Posterior cingulate gyrus (tissue), 11 donors: ENCODE measurements at regions of chr1 and their contacts with region 1.

Region 1: DNA sequence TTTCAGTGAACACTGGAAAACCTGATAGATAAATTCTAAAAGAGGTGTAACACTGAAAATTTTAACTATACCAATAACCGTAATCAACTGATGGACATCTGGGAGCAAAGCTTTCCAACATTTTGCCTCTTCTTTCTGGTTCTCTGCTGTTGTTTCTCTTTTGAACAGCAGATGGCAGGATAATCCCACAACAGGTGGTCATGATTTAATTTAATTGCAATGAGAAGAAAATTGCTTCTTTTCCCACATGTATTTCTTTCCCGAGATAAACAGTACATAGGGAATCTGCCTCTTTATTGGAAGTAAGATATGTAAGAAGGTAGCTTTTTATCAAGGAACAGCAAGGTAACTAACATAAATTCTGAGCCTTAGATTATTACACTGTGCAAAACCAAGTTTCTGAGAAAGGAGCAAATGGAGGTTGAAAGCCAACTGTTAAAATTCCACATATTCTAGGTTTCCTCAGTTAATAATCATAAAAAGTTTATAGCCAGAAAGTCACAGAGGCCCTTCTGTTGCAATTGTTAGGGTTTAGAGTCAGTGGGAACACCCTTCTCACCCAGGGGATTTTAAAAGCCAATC is 72.9 kb downstream of the RPS6KA1 start:
- DNase-seq: peak in 1 of 10 donors; percentile 20

Region 2: DNA sequence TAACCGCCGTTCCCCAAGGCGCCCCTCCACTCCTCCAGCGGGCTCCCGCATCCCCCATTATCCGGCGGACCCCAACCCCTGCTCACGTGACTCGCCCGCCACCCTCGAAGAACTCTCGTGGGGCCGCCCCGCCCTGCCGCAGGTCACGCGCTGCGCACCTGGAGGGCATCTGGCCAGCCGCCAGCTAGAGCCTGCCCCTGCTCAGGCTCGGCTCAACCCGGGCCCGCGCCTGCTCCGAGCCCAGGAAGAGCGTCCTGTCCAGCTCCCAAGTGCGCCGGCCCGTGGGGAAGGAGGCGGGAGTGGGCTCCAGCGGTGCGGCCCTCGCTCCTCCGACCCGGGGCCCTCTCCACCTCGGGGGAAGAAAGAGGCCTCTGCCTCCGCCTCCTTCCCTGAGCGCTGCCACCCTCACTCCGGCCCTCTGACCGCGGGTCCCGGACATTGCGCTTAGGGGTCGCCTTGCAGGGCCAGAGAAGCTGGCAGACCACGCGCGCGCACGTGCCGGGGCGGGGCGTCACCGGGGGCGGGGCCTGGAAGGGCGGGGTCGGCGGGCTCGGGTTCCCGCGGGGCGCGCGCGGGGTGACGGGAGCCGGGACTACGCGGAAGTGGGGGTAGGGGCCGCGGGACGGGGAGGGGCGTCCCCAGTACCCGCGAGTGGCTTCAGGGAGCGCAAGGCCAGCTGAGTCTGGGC is 101.8 kb before region 1 on chr1:
- intact Hi-C with region 1: loop called (anchors 10 kb)
- DNase-seq: peak; percentile 75 to 98 (median 88)

Region 3: GRCh38 chr1:26529655-26530409 is 72.6 kb before region 1 on chr1 and contains the start of gene RPS6KA1:
- intact Hi-C with region 1: loop called (anchors 10 kb)
- DNase-seq: peak; percentile 40 to 97 (median 75)

Region 4: DNA sequence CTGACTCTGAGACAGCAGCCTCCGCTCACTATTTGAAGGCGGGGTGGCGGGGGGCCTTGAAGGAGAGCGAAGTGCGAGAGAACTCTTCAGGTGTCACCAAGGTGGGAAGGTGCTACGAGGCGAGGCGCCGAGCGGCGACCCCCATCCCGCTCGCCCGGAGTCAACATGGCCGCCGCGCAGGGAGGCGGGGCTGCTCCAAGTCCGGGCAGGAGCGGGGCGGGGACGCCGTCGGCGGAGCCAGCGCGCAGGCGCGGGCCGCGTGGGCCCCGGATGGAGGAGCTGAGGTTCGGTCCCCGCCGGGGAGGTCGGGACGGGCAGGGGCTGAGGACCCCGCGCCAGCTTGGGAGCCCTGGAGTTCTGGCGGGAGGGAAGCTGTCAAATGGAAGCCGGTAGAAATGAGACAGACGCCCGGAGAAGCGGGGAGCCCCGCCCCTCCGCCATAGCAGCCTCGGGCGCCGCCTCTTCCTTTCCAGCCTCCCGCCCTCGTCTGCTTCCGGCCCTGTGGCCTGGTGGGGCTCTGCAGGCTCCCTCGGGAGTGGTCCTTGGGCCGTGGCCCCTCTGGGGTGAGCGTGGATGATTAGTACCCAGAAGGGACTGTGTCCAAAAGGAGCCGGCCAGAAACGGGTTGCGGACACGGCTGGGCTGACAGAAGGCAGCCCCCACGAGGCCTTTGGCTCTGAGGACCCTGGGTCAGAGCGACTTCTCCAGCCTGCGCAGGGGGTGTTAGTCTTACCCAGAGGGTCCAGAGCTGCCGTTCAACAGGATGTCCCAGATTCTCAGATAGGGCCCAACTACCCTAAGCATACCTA is 185.4 kb after region 1 on chr1 and contains the start of gene PIGV:
- intact Hi-C with region 1: loop called (anchors 1 kb)
- DNase-seq: peak; percentile 81 to 98 (median 86)

Region 5: DNA sequence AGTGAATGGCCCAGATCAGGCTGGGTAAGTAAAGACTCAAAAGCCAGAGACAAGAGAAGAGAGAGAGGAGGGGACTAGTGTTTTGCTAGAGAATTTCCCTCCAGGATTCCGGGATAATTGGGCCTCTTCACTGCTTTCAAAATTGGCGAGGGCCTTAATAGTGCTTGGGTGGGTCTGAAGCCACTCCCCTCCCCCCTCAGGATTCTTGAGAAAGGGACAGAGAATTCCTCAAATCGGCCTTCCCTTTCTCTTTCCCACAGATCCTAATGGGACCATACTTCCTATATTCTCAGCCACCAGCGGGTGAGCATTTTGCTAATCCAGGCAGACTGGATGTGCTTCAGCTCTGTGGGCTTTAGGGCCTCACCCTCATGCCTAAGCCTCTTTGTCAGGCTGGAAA is 272.4 kb after region 1 on chr1:
- intact Hi-C with region 1: loop called (anchors 5 kb)
- DNase-seq: no peak